ENCODE measurements at regions of chr15 and their contacts with region 1.

Region 1: DNA sequence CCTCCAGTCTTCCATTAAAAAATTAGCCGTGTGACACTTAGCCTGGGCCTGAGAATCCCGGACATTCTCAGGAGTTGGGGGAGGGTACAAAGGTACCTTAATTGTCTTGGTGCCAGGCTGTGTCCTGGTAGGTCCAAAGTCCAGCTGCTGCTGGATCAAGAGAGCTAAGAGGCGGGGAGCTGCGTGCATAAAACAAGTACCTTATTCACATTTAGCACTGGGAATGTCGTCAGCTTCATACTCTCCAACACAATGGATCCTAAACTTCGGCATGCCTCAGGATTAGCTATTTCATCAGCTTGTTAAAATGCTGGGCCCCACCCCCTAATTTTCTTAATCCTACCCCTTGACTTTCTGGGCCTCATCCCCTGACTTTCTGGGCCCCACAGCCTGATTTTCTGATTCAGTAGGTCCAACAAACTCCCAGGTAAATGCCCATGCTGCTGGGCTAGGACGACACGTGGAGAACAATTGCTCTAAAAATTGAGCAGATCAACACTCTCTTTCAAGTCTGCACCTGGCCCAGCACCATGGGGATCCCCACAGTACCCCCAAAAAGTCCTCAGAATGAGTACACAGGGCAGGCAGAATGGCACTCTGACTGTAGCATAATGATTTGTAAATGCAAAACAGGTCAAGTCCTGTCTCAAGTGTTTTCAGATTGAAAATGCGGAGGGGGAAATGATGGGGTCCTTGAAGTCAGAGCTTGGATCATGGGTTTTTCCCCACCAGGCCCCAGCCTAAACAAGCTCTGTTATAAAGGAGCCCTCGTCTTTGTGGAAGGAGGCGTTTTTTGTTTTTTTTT is 5.6 kb upstream of the AEN start:
- H3K4me3 ChIP-seq: no peak overlapping the region
- H3K27ac ChIP-seq: no peak overlapping the region
- H3K4me1 ChIP-seq: peaks cover 4% of the 10 kb centered on the region
- CTCF ChIP-seq: no peak

Region 2: DNA sequence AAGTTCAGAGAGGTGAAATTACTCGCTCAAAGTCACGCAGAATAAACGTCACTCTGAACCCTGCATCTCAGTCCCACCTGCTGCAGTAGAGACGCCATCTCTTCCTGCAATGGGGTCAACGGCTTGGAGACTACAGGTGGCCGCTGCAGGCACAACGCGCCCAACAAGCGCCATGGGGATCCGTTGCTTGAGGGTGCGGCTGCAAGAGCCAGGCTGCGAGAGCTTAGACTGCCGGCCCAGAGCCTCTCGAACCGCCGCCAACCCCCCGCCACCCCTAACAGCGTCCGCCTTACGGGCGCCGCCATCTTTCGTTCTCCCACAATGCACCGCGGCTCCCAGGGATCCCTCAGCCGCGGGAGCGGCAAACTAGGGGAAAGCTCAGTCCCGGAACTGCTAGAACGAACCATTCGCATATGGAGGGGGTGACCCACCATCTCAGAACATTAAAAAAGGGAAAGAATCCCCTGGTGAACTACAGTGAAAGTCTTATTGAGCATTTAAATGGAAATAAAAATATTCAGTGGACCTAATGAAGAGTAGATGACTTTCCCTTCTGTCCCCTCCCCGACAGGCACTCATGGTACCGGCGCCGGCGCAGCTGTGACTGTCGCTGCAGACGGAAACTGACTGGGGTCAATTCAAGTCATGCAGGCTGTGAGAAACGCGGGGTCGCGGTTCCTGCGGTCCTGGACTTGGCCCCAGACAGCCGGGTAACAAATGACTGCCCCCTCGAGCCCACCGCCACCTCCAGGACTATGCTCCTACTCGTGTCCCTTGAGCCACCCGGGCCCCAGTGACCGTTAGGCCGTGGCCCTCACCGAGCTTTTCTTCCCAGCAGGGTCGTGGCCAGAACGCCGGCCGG is 148.2 kb before region 1 on chr15 and contains the starts of genes MRPL46 and MRPS11:
- CTCF ChIA-PET with region 1: interaction called, 22 read pairs
- POLR2A ChIA-PET with region 1: interaction called, 6 read pairs
- H3K4me3 ChIP-seq: peak within 1 kb of the TSS; percentile 96
- H3K27ac ChIP-seq: peak within 1 kb of the TSS; percentile 83
- H3K4me1 ChIP-seq: peaks cover 4% of the 10 kb centered on the region; the same call in 1 of the 2 replicates
- CTCF ChIP-seq: no peak

Region 3: DNA sequence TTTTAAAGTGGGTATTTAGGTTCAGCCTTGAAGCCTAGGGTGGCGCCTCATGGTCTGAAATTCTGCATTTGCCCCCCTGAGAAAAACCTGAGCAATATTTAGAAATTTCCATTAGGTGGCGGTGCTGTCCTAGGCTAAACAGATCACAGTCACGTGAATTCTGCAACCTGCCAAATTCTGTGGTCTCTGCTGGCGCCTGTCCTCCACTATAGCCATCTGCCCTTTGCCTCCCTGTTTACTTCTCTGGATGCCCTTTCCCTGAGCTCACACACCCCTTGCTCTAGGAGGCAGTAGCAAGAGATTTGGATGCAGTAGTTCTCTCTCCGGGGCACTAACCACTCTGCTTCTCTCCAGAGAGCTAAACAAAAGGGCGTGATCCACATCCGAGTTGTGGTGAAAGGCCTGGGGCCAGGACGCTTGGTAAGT is 138.9 kb before region 1 on chr15:
- CTCF ChIA-PET with region 1: interaction called, 31 read pairs
- POLR2A ChIA-PET with region 1: interaction called, 3 read pairs
- H3K4me3 ChIP-seq: no peak overlapping the region
- H3K27ac ChIP-seq: no peak overlapping the region
- H3K4me1 ChIP-seq: no peaks in the 10 kb centered on the region
- CTCF ChIP-seq: peak; percentile 63; the same call in 1 of the 2 replicates

Region 4: GRCh38 chr15:88489321-88489720 is 126.2 kb before region 1 on chr15:
- CTCF ChIA-PET with region 1: interaction called, 10 read pairs
- POLR2A ChIA-PET with region 1: no interaction called
- H3K4me3 ChIP-seq: no peak overlapping the region
- H3K27ac ChIP-seq: no peak overlapping the region
- H3K4me1 ChIP-seq: no peaks in the 10 kb centered on the region
- CTCF ChIP-seq: peak; percentile 42; the same call in 1 of the 2 replicates

Region 5: DNA sequence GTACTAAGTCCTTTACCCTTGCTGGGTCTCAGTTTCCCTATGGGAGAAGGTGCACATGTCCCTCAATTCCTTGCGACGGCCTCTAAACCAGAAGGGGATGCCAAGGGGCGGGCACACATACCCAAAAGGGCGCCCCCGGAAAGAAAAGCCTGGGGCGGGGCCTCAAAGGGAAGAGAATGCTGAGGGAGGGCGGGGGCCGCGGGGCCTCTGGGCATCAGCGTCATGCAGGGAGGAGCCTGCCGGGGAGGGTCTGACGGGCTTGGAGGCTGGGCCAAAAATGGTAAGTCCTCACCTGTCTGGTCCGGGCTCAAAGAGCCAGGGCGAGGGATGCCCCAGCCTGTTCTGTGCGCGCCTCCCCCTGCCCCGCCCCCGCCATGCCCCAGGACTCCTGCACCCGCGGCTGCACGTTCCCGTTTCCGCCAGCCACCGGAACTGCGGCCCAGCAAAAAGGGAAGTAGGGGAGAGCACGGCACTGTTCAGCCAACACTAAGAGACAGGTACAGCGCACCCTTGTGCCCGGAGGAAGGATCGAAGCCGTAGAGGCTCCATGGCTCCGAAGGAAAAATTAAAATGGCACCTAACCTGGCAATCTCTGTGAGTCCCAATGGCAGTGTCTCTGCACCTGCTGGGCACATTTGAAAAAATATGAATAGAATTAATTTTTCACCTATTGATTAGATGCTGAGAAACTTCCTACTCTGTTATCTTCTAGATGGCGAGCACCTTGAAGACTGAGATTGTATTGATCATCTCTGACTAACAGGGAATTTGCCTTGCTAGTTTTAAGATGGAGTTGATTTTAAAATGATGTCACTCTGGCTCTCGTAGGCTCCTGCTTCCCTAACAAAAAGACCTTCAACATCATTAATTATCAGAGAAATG is 69.0 kb before region 1 on chr15 and contains the start of gene DET1:
- CTCF ChIA-PET with region 1: no interaction called
- POLR2A ChIA-PET with region 1: no interaction called
- H3K4me3 ChIP-seq: peak within 1 kb of the TSS; percentile 54
- H3K27ac ChIP-seq: peak within 1 kb of the TSS; percentile 73
- H3K4me1 ChIP-seq: peaks cover 3% of the 10 kb centered on the region; the same call in 1 of the 2 replicates
- CTCF ChIP-seq: peak; percentile 83

Region 6: GRCh38 chr15:88644741-88645140 is 29.2 kb after region 1 on chr15:
- CTCF ChIA-PET with region 1: no interaction called
- POLR2A ChIA-PET with region 1: no interaction called
- H3K4me3 ChIP-seq: no peak overlapping the region
- H3K27ac ChIP-seq: no peak overlapping the region
- H3K4me1 ChIP-seq: peaks cover 9% of the 10 kb centered on the region
- CTCF ChIP-seq: no peak